Psoas muscle (tissue), 8 donors: ENCODE measurements at regions of chr7 and their contacts with region 1.

Region 1: DNA sequence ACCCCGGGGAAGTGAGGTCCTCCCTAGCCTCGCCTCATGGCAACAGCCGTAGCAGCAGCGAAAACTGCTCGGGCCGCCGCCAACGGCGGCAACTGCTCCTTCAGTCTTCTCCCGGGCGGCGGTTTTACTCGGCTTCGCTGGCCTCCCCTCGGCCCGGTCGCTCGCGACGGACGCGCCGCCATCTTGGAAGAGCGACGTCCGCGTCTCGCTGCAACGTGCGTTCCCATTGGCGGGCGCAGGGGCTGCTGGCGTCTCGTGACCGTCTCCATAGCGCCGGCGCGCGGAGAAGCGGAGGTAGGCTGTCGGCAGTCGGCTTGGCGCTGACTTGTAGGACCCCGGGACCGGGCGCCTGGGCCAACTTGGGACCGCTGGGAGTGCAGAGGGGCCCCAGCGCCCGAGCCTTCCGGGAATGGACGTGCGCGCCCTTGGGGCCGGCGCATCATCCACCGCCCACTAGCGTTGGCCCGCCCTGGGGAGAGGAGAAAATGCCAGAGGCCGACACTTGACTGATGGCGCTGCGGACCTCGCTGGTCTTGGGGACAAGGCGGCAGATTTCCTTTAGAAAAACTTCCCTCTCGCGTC is at the start of gene SNX13:
- DNase-seq: peak; percentile 92 to 97
- ATAC-seq: peak; percentile 98 to 99 (median 98)
- H3K4me3 ChIP-seq: peak within 1 kb of the TSS; percentile 97
- H3K27ac ChIP-seq: peak within 1 kb of the TSS; percentile 99
- H3K4me1 ChIP-seq: peaks cover 39% of the 10 kb centered on the region
- H3K27me3 ChIP-seq: no peaks in the 10 kb centered on the region
- CTCF ChIP-seq: peak; percentile 37
- total RNA-seq, gene SNX13: 37.5 to 59.2 (median 44.7) TPM

Region 2: GRCh38 chr7:17769918-17770317 is 170.5 kb before region 1 on chr7:
- intact Hi-C with region 1: loop called in 1 of 2 experiments (anchors 5 kb)
- DNase-seq: peak; percentile 32 to 52
- ATAC-seq: peak; percentile 34 to 63 (median 44)
- H3K4me3 ChIP-seq: no peak overlapping the region
- H3K27ac ChIP-seq: no peak overlapping the region
- H3K4me1 ChIP-seq: peaks cover 5% of the 10 kb centered on the region
- H3K27me3 ChIP-seq: no peaks in the 10 kb centered on the region
- CTCF ChIP-seq: peak; percentile 57

Region 3: DNA sequence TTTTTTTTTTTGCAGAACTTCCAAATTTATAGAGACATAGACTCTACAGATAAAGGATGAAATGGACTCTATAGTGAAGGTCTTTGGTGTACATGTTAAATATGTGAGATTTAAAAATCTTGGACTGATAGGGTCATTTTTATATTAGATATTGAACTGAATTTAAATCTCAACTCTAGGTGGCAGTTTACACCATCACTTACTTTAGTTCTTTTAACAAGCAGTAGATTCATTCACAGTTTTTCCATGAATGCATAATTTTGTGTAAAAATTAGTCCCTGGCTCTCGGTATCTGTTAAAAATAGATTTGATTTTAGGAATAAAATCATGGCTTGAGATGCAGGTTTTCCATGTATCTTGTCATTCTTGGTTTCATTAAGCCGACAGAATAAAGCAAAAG is 31.0 kb after region 1 on chr7:
- intact Hi-C with region 1: no loop called
- DNase-seq: no peak
- ATAC-seq: no peak
- H3K4me3 ChIP-seq: no peak overlapping the region
- H3K27ac ChIP-seq: no peak overlapping the region
- H3K4me1 ChIP-seq: no peaks in the 10 kb centered on the region
- H3K27me3 ChIP-seq: no peaks in the 10 kb centered on the region
- CTCF ChIP-seq: peak; percentile 12

Region 4: DNA sequence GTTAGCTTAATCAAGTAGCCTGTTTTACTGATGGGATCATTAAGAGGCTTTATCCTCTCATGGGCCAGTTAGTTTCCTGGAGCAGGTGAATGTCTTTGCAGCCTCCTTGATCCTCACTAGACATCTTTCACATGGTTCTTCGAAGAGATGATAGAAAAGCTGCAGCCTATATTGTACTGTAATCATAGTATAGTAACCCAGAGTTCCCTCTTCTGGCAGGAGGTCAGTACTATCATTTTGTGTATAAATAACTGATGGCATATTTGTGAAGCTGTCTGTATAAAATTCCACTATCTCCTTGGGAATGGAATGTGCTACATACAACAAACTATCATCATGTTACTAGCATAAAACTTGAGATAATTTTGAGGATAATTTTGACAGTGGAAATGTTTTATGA is 211.0 kb after region 1 on chr7:
- intact Hi-C with region 1: no loop called
- DNase-seq: no peak
- ATAC-seq: no peak
- H3K4me3 ChIP-seq: no peak overlapping the region
- H3K27ac ChIP-seq: no peak overlapping the region
- H3K4me1 ChIP-seq: no peaks in the 10 kb centered on the region
- H3K27me3 ChIP-seq: no peaks in the 10 kb centered on the region
- CTCF ChIP-seq: no peak